ENCODE measurements at regions of chr7 and their contacts with region 1.

Region 1: GRCh38 chr7:46352004-46352954 is 431.2 kb upstream of the IGFBP3 start:
- DNase-seq: peak; percentile 71
- H3K4me3 Mint-ChIP-seq: no peak overlapping the region
- H3K27ac Mint-ChIP-seq: no peak overlapping the region
- H3K4me1 Mint-ChIP-seq: peaks cover 5% of the 10 kb centered on the region
- H3K27me3 Mint-ChIP-seq: no peaks in the 10 kb centered on the region
- CTCF ChIP-seq: peak; percentile 72

Region 2: DNA sequence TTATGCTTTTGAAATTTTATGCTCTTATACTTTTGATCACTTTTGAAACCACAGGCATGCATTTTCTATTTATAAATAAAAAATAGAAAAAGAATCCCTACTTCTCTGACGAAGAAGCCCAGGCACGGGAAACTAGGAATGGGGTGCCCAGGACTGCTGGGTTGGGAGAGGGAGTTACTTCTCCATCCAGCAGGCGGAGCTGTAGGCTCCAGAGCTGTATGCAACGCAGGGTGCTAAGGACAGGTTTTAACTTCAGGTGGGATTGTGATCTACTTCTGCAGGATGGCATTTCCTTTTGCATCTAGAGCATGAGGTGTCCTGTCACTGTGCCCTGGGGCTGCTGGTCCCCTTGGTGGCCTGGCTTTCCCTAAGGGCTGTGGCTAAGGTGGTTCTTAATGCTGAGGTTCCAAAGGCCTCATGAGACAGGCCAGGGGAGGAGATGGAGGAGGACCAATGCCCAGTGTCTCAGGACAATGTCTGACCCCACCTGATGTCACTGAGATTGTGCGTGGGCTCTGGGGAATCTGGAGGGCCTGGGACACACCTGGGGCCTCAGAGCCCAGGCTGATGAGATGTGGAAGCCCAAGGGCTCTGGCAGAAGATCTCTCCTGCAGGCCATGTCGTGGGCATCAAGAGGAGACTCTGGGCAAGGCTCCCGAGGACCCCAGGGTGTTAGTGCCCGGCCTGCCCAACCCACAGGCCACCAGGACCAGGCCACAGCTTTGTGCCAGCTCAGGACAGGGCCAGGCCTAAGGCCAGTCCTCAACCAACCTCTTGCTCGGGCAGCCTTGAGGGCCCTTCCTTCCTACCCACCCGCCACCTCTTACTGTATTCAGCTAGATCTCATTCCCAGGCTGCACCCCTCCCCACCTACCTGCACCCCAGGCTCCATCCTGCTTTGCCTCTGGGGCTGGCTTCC is 479.9 kb before region 1 on chr7:
- CTCF ChIA-PET with region 1: interaction called, 4 read pairs
- POLR2A ChIA-PET with region 1: no interaction called
- intact Hi-C with region 1: loop called (anchors 5 kb)
- DNase-seq: peak; percentile 42
- H3K4me3 Mint-ChIP-seq: no peak overlapping the region
- H3K27ac Mint-ChIP-seq: no peak overlapping the region
- H3K4me1 Mint-ChIP-seq: peaks cover 6% of the 10 kb centered on the region
- H3K27me3 Mint-ChIP-seq: no peaks in the 10 kb centered on the region
- CTCF ChIP-seq: peak; percentile 61

Region 3: GRCh38 chr7:45917658-45918057 is 434.6 kb before region 1 on chr7:
- CTCF ChIA-PET with region 1: interaction called, 191 read pairs
- POLR2A ChIA-PET with region 1: interaction called, 5 read pairs
- intact Hi-C with region 1: loop called (anchors 1 kb)
- DNase-seq: peak; percentile 67
- H3K4me3 Mint-ChIP-seq: no peak overlapping the region
- H3K27ac Mint-ChIP-seq: no peak overlapping the region
- H3K4me1 Mint-ChIP-seq: peaks cover 25% of the 10 kb centered on the region
- H3K27me3 Mint-ChIP-seq: no peaks in the 10 kb centered on the region
- CTCF ChIP-seq: peak; percentile 93

Region 4: DNA sequence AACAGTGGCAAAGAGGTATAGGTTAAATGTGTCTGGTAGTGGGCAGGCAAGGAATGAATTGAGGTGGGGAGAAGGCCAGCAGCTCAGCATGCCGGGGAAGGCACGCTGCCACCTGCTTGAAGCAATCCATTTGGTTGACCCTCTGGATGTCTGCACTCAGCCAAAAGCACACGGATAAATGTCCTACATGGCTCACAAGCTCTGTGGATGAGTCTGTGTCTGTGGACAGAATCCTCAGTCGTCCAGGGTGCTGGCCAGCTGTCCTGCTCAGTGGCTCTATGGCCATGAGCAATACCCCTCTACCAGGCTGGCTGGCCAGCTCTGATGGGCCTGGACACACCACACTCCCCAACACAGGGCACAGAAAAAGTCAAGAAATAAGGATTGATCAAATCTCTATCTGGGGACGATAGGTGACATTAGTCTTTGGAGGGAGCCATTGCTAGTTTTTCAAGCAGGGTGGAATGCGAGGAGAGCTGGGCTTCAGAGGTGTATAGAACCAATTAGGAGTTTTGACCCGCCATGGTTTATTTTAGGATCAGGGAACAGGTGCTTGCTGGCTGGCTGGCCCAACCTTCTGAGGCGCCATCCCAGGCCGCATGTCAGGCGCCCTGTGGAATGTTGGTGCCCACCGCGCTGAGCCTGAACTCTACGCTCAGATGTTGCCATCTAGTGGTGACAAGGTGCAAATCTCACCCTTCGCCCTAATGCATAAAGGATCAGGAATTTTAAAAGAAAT is 736.2 kb after region 1 on chr7:
- CTCF ChIA-PET with region 1: interaction called, 5 read pairs
- POLR2A ChIA-PET with region 1: no interaction called
- intact Hi-C with region 1: loop called (anchors 1 kb)
- DNase-seq: peak; percentile 64
- H3K4me3 Mint-ChIP-seq: no peak overlapping the region
- H3K27ac Mint-ChIP-seq: peak overlapping the region; percentile 52
- H3K4me1 Mint-ChIP-seq: peaks cover 13% of the 10 kb centered on the region
- H3K27me3 Mint-ChIP-seq: no peaks in the 10 kb centered on the region
- CTCF ChIP-seq: peak; percentile 87